GM12878 (cell line): ENCODE measurements at regions of chr9 and their contacts with region 1.

Region 1: GRCh38 chr9:72718503-72718902 is 197.1 kb downstream of the TMC1 start:
- DNase-seq: no peak
- ATAC-seq: no peak; the same call in 2 of the 3 replicates
- H3K4me3 ChIP-seq: no peak overlapping the region
- H3K27ac ChIP-seq: no peak overlapping the region
- H3K4me1 ChIP-seq: no peaks in the 10 kb centered on the region
- H3K27me3 ChIP-seq: no peaks in the 10 kb centered on the region
- CTCF ChIP-seq: peak in 2 of 3 experiments; percentile 7 to 21; a peak in 1 of 6 replicates
- EP300 ChIP-seq: no peak
- POLR2A ChIP-seq: no peak
- RAD21 ChIP-seq: no peak

Region 2: DNA sequence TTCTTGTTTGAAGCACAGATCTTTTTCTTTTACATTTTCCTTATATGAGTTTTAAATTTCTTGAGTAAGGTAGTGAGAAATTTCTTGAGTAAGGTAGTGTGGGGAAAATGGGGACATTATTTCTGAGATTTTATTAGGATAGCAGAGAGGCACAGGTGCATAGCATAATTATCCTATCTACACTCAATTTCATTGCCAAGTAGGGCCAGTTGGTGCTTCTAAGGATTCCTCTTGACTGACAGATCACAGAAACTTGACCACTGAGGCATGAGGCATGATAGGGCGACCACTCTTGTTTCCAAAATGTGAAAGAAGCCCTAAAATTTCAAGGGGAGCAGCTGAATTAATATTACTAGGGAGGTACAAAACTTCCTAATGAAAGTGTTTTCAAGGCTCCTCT is 228.5 kb before region 1 on chr9:
- CTCF ChIA-PET with region 1: no interaction called
- POLR2A ChIA-PET with region 1: no interaction called
- RAD21 ChIA-PET with region 1: no interaction called
- SMC1A ChIA-PET with region 1: no interaction called
- in situ Hi-C with region 1: no loop called
- intact Hi-C with region 1: no loop called
- DNase-seq: no peak
- ATAC-seq: no peak
- H3K4me3 ChIP-seq: no peak overlapping the region
- H3K27ac ChIP-seq: no peak overlapping the region
- H3K4me1 ChIP-seq: no peaks in the 10 kb centered on the region
- H3K27me3 ChIP-seq: no peaks in the 10 kb centered on the region
- CTCF ChIP-seq: no peak
- EP300 ChIP-seq: no peak
- POLR2A ChIP-seq: no peak
- RAD21 ChIP-seq: no peak

Region 3: DNA sequence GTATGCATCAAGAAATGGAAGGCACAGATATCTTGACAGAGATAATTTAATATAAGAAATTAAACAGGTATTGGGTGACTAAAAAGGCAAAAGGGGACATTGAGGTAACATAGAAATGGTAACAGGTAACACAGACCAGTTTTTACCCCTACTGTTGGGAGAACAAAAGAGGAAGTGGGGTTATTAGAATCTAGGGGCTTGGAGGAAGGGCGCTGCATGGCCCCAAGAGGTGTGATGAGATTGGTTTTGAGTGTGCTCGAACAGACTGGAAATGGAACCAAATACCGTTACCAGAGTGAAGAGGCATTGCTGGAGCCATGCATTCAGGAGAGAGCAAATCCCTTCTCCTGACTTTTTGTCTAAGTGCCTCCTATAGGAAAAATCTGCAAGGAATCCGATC is 40.4 kb after region 1 on chr9:
- CTCF ChIA-PET with region 1: no interaction called
- POLR2A ChIA-PET with region 1: no interaction called
- RAD21 ChIA-PET with region 1: no interaction called
- SMC1A ChIA-PET with region 1: interaction called, 3 read pairs
- in situ Hi-C with region 1: no loop called
- intact Hi-C with region 1: loop called (anchors 1 kb)
- DNase-seq: no peak
- ATAC-seq: no peak; the same call in 2 of the 3 replicates
- H3K4me3 ChIP-seq: no peak overlapping the region
- H3K27ac ChIP-seq: no peak overlapping the region
- H3K4me1 ChIP-seq: no peaks in the 10 kb centered on the region
- H3K27me3 ChIP-seq: no peaks in the 10 kb centered on the region
- CTCF ChIP-seq: no peak
- EP300 ChIP-seq: no peak
- POLR2A ChIP-seq: no peak
- RAD21 ChIP-seq: no peak